Naive thymus-derived CD4-positive, alpha-beta T cell (primary cell): ENCODE measurements at regions of chr16 and their contacts with region 1.

Region 1: GRCh38 chr16:70737377-70738082 is 51.7 kb upstream of the MTSS2 start:
- DNase-seq: peak; percentile 41 to 88 (median 81)
- ATAC-seq: peak; percentile 91
- H3K4me3 ChIP-seq: no peak overlapping the region
- H3K4me3 Mint-ChIP-seq: peak overlapping the region; percentile 60 to 90 (median 78)
- H3K27ac ChIP-seq: peak overlapping the region; percentile 76
- H3K27ac Mint-ChIP-seq: peak overlapping the region; percentile 87 to 100 (median 98)
- H3K4me1 ChIP-seq: peaks cover 18 to 32% of the 10 kb centered on the region in 2 donors
- H3K4me1 Mint-ChIP-seq: peaks cover 25 to 70% (median 48%) of the 10 kb centered on the region in 7 donors
- H3K27me3 ChIP-seq: no peaks in the 10 kb centered on the region
- H3K27me3 Mint-ChIP-seq: no peaks in the 10 kb centered on the region

Region 2: DNA sequence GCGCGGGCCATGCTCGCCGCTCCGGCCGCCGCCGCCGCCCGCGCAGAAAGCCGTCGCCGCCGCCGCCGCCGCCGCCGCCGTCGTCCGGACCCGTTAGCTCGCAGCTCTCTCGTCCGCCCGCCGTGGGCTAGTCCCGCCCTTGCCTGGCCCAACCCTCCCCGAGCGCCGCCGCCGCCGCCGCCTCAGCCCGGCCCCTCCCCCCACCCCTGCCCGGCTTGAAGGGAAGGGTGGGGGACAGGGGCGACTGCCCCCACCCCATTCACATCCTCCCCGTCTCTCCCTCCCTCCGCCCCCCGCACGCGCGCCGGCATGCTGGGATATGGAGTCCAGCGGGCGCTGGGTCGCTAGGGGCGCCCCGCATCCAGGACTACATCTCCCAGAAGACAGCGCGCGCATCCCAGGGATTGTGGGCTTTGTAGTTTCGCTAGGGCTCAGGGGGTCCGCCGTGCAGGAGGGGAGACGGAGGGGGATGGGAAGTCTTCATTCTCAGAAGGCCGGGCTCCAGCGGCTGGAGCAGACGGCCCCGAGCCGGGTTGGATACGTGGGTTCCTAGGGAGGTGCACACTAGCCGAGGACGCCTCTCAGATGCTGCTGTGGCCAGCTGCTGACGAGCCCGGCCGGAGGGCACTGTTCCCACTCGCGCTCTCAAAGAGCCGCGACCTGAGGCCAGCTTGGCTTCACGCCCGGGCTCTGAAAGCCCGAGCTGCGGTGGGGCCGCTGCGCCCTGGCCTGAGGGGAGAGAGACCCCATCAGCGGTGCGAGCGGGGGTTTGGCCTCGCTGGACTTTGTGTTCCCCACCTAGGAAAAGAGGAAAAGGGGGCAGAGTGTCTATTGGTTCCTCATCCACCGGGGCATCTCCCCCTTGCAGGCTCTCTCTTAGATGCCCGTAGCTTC is 298.3 kb before region 1 on chr16 and contains the start of gene ST3GAL2:
- CTCF ChIA-PET with region 1: no interaction called
- POLR2A ChIA-PET with region 1: no interaction called
- intact Hi-C with region 1: loop called in 1 of 2 experiments (anchors 1 kb)
- DNase-seq: peak; percentile 84 to 94 (median 90)
- ATAC-seq: peak; percentile 99
- H3K4me3 ChIP-seq: peak within 1 kb of the TSS; percentile 82
- H3K4me3 Mint-ChIP-seq: peak within 1 kb of the TSS; percentile 92 to 99 (median 98)
- H3K27ac ChIP-seq: peak within 1 kb of the TSS; percentile 58
- H3K27ac Mint-ChIP-seq: peak within 1 kb of the TSS; percentile 84 to 97 (median 93)
- H3K4me1 ChIP-seq: peaks cover 11 to 23% of the 10 kb centered on the region in 2 donors
- H3K4me1 Mint-ChIP-seq: peaks cover 18 to 46% (median 37%) of the 10 kb centered on the region in 7 donors
- H3K27me3 ChIP-seq: no peaks in the 10 kb centered on the region
- H3K27me3 Mint-ChIP-seq: no peaks in the 10 kb centered on the region
- total RNA-seq, gene ST3GAL2: 16.6 to 35.9 (median 30.4) TPM

Region 3: DNA sequence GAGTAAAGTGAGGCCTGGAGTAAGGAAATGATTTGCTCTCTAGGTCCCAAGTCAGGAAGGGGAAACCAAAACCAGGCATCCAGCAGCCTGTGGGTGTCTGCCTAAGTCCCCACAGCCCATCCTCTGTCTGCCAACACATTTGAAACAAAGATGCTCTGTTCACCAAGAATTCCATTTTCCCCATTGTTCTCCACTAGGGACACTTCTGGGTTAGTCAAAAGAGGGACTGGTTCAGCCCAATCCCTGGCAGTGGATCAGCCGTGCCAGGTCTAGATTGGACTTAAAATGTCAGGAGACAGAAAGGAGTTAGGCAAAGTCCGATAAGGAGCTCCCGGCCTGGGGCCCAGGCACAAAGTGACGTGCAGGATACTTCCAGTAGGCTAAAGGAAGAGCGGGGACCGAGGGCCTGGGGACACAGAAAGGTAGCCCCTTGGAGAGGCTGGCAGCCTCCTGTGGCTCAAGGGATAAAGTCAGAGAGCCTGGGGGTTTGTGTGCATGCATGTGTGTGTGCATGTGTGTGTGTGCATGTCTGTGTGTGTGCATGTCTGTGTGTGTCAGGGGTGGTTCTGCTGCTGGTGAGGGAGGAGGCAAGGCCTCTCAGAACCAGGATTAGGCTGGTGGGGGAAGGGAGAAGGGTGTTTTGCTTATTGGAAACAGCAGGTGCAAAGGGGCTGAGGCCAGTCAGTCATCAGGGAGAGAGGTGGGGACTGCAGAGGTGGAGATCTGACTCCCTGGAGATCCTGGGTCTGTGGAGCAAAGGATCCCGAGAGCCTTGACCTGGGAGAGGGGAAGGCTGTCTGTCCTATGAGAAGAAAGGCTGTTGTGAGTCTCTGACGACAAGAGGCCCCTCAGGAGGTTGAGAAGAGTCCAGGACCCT is 132.9 kb before region 1 on chr16:
- CTCF ChIA-PET with region 1: no interaction called
- POLR2A ChIA-PET with region 1: no interaction called
- intact Hi-C with region 1: no loop called
- DNase-seq: no peak
- ATAC-seq: no peak
- H3K4me3 ChIP-seq: no peak overlapping the region
- H3K4me3 Mint-ChIP-seq: no peak overlapping the region
- H3K27ac ChIP-seq: no peak overlapping the region
- H3K27ac Mint-ChIP-seq: peak overlapping the region in 1 of 9 donors; percentile 27
- H3K4me1 ChIP-seq: no peaks in the 10 kb centered on the region
- H3K4me1 Mint-ChIP-seq: no peaks in the 10 kb centered on the region
- H3K27me3 ChIP-seq: no peaks in the 10 kb centered on the region
- H3K27me3 Mint-ChIP-seq: peaks cover 0 to 11% (median 0%) of the 10 kb centered on the region in 5 donors

Region 4: DNA sequence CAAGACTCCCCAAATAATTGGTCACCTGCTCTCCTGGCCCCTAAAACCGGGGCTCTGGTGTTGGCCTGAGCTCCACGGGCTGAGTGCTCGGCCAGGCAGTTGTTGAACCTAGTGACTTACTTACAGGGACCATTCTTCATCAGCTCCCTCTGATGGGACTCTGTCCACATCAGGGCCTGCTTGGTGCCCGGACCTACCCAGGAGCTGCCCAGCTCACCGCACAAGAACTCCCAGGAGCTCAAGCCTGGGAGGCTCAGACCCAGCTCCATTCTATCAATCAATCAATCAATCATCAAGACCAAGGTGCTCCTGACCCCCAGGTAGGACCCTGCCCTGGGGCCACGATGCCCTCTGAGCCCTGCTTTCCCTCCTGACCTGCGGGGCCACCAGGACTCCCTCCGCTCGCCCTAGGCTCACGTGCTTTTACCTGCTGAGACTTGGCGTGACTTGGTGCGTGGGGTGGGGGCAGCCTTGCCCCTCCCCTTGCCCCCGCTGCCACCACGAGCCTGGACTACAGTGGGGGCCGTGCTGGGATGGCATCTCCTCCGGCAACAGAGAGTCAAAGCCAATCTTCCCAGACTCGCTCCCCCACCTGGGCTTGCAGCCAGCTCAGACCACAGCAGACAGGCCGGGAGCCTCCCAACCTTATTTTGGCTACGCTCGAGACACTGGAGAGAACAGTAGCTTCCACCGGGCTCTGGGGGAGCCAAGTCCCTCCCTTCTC is 75.5 kb before region 1 on chr16:
- CTCF ChIA-PET with region 1: no interaction called
- POLR2A ChIA-PET with region 1: no interaction called
- intact Hi-C with region 1: no loop called
- DNase-seq: no peak
- ATAC-seq: no peak
- H3K4me3 ChIP-seq: no peak overlapping the region
- H3K4me3 Mint-ChIP-seq: no peak overlapping the region
- H3K27ac ChIP-seq: no peak overlapping the region
- H3K27ac Mint-ChIP-seq: no peak overlapping the region
- H3K4me1 ChIP-seq: no peaks in the 10 kb centered on the region
- H3K4me1 Mint-ChIP-seq: no peaks in the 10 kb centered on the region
- H3K27me3 ChIP-seq: no peaks in the 10 kb centered on the region
- H3K27me3 Mint-ChIP-seq: peaks cover 0 to 3% (median 0%) of the 10 kb centered on the region in 5 donors

Region 5: DNA sequence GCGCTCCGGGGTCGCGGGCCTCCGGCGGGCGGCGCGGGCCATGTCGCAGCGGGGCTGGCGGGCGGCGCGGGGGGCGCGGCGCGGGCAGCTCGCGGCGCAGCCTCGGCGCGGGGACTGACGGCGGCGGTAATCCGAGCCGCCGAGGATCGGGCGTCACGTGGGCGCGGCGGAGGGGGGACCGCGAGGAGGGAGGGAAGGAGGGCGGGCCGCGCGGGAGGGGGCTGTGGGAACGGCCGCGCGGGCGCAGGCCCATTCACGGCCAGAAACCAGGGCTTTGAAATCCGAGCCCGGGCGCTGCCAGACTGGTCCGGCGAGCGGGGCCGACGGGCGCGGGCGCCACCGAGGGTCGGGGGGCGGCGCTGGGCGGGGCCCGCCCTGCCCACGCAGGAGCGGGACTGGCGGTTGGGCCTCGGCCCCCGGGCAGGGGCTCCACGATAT is 51.6 kb before region 1 on chr16 and contains the start of gene MTSS2:
- CTCF ChIA-PET with region 1: no interaction called
- POLR2A ChIA-PET with region 1: interaction called, 3 read pairs
- intact Hi-C with region 1: loop called in 1 of 2 experiments (anchors 1 kb)
- DNase-seq: peak in 4 of 9 donors; percentile 14 to 41 (median 24)
- ATAC-seq: peak; percentile 45
- H3K4me3 ChIP-seq: no peak within 1 kb of the TSS
- H3K4me3 Mint-ChIP-seq: peak within 1 kb of the TSS; percentile 42 to 77 (median 70)
- H3K27ac ChIP-seq: no peak within 1 kb of the TSS
- H3K27ac Mint-ChIP-seq: peak within 1 kb of the TSS in 1 of 9 donors; percentile 14
- H3K4me1 ChIP-seq: peaks cover 0 to 7% of the 10 kb centered on the region in 2 donors
- H3K4me1 Mint-ChIP-seq: peaks cover 0 to 8% (median 4%) of the 10 kb centered on the region in 7 donors
- H3K27me3 ChIP-seq: peaks cover 0 to 6% of the 10 kb centered on the region in 2 donors
- H3K27me3 Mint-ChIP-seq: peaks cover 0 to 26% (median 4%) of the 10 kb centered on the region in 5 donors
- total RNA-seq, gene MTSS2: 1.4 to 16.7 (median 11.5) TPM

Region 6: DNA sequence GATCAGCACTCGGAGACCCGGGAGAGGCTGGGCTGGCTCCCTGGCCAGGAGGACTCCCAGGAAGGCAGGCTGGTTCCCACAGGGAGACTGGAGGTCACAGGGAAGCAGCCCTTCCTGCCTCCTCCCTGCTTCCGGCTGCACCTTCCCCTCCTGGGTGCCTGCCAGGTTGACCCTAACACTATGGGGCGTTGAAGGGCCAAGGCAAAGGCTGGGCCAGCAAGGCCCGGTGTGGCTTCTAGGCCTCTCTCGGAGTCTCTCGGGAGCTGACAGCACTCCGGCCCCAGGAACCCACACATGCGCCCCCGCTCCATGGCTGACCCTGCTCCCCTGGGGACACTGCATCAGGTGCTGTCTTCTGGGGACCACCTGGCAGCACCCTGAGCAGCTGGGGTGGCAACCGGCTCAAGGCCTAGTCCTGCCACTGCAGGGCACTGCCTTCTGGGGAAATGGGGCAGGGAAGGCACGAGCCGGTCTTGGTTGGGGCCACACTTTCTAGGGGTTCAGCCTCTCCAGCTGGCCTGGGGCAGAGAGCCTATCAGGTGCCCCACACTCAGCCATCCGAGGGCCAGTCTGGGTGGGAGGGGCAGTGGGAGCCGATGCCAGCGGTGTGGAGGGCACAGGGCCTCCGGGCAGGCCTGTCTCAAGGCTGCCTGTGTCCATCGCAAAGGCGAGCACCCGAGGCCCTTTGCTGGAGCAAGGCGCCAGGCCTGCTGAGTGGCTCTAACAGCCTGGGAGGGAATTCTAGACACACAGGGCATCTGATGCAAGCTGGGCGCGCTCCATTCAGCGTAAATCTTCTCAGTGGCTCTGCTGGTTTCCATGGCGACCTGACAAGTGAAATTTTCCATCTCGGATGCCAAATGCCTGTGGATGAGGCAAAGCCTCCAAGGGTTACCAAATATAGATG is 46.1 kb before region 1 on chr16:
- CTCF ChIA-PET with region 1: no interaction called
- POLR2A ChIA-PET with region 1: interaction called, 14 read pairs
- intact Hi-C with region 1: loop called (anchors 1 to 2 kb)
- DNase-seq: no peak
- ATAC-seq: no peak
- H3K4me3 ChIP-seq: no peak overlapping the region
- H3K4me3 Mint-ChIP-seq: no peak overlapping the region
- H3K27ac ChIP-seq: no peak overlapping the region
- H3K27ac Mint-ChIP-seq: no peak overlapping the region
- H3K4me1 ChIP-seq: peaks cover 0 to 8% of the 10 kb centered on the region in 2 donors
- H3K4me1 Mint-ChIP-seq: peaks cover 10 to 20% (median 15%) of the 10 kb centered on the region in 7 donors
- H3K27me3 ChIP-seq: no peaks in the 10 kb centered on the region
- H3K27me3 Mint-ChIP-seq: peaks cover 0 to 9% (median 2%) of the 10 kb centered on the region in 5 donors

Region 7: DNA sequence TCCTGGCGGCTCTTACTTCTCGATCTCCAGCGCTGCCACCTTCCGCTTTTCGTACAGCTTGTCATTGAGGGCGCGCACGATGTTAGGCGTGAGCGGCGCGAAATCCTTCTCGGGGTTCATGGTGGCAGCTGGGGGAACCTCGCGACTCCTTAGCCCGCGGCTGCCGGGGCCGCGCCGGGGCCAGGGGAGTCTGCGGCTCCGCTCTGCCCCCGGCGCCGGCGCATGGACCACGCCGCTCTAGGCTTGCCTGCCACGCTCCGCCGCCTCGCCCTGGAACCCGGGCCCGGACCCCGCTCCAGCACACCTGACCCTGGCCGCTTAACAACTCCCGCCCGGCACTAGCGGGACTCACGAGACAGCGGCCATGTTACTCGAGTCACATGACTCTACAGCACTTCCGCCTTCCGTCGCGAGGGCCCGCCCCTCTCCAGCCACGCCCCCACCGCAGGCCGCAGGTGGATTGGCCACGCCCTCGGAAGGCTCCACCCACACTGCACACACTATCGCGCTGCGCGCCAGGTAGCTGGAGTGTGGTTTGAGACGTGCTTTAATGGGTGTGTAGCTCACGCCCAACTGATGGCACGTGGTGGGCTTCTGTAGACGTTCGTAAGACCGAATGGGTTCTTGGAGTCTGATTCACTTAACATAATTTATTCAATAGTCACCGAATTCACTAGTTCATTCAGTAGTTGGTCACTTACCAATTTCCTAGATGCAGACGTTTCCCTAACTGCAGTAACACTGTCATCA is 63.4 kb after region 1 on chr16 and contains the start of gene VAC14:
- CTCF ChIA-PET with region 1: no interaction called
- POLR2A ChIA-PET with region 1: interaction called, 4 read pairs
- intact Hi-C with region 1: loop called (anchors 2 kb)
- DNase-seq: peak; percentile 96 to 99 (median 97)
- ATAC-seq: peak; percentile 99
- H3K4me3 ChIP-seq: peak within 1 kb of the TSS; percentile 90
- H3K4me3 Mint-ChIP-seq: peak within 1 kb of the TSS; percentile 90 to 98 (median 94)
- H3K27ac ChIP-seq: peak within 1 kb of the TSS; percentile 78
- H3K27ac Mint-ChIP-seq: peak within 1 kb of the TSS; percentile 84 to 95 (median 92)
- H3K4me1 ChIP-seq: peaks cover 11 to 17% of the 10 kb centered on the region in 2 donors
- H3K4me1 Mint-ChIP-seq: peaks cover 19 to 49% (median 44%) of the 10 kb centered on the region in 7 donors
- H3K27me3 ChIP-seq: no peaks in the 10 kb centered on the region
- H3K27me3 Mint-ChIP-seq: peaks cover 0 to 15% (median 0%) of the 10 kb centered on the region in 5 donors
- total RNA-seq, gene VAC14: 36.7 to 47.1 (median 45.9) TPM